GM23248 (cell line): ENCODE measurements at regions of chr4 and their contacts with region 1.

Region 1: DNA sequence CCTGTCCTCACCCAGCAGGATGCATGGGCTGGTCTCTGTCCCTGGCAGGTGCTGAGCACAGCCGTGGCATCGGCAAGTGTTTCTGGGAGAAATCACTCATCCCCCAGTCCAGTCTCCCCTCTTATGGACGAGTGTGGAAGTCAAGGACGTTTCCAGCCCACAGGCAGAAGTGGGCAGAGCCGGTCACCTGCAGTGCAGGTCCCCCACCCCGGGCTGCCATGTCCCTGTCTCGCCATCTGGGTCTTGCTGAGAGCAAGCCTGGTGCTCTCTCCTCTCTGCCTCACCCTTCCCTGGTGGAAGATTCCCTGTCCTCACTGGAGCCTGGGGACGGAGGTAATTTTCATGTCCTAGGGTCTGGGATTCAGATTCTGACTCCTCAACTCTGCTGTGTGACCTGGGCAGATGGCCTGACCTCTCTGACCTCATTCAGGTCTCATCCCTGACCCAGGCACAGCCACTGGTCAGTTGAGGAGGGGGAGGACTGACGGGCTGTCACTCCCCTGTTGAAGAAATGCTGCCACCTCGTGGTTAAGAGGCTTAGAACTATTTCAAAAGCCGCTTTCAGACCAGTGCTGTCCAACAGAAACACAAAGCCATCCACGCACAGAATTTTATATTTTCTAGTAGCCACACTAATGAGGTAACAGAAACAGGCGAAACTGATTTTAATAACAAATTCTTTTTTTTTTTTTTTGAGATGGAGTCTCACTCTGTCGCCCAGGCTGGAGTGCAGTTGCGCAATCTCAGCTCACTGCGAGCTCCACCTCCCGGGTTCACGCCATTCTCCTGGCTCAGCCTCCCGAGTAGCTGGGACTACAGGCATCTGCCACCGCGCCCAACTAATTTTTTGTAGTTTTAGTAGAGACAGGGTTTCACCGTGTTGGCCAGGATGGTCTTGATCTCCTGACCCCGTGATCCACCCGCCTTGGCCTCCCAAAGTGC is 1.8 kb downstream of the CPZ start:
- DNase-seq: peak; percentile 86
- H3K4me3 ChIP-seq: no peak overlapping the region
- H3K27ac ChIP-seq: no peak overlapping the region
- H3K4me1 ChIP-seq: peaks cover 12% of the 10 kb centered on the region
- H3K27me3 ChIP-seq: peaks cover 6% of the 10 kb centered on the region; the same call in 1 of the 2 replicates

Region 2: GRCh38 chr4:8058031-8058479 is 536.3 kb before region 1 on chr4:
- in situ Hi-C with region 1: no loop called
- DNase-seq: no peak
- H3K4me3 ChIP-seq: no peak overlapping the region
- H3K27ac ChIP-seq: no peak overlapping the region
- H3K4me1 ChIP-seq: no peaks in the 10 kb centered on the region
- H3K27me3 ChIP-seq: peaks cover 9% of the 10 kb centered on the region

Region 3: DNA sequence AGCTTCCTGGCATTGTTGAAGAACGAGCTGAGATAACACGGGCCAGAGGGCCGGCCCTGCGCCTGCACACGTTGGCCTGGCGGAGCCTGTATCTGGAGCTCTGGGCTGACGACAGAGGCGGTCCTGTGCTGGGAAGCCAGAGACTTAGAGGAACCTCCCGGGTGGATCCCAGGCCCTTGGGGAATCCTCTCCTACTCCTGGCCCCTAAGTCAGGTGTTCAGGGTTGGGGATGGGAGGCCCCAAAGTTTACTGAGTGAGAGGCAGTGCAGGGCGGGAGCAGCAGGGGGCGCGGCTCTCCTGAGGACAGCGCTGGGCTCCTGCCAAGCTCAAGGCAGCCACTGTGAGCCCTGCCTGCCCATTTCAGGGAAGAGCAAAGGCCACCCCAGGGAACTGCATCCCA is 327.3 kb before region 1 on chr4:
- in situ Hi-C with region 1: no loop called
- DNase-seq: peak; percentile 89
- H3K4me3 ChIP-seq: no peak overlapping the region
- H3K27ac ChIP-seq: no peak overlapping the region
- H3K4me1 ChIP-seq: 0 out of 2 replicates have a peak, but pooled peaks cover 3% of the 10 kb centered on the region
- H3K27me3 ChIP-seq: peaks cover 8% of the 10 kb centered on the region; the same call in 1 of the 2 replicates

Region 4: DNA sequence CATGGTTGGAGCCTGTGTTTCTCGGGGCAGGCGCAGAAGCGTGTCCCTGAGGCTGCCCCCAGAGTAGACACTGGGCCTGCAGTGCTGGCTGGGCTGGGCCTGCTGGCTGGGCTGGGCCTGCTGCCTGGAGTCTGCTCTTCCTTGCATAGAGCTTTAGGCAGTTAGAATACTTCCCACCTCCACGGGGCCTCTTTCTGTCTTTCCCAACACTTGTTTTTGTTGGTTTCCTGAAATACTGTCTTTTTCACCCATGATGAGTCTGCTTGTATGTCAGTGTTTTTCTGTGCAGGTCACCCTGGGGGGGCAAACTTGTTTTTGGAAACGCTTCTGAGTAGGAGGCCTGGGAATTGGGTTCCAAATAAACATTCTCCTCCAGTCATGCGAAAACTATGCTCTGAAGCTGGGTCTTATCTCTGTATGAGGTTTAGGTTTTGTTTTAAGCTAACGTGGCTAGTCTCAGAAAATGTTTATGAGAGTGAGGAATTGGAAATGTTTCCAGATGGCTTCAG is 121.6 kb before region 1 on chr4:
- in situ Hi-C with region 1: loop called (anchors 10 kb)
- DNase-seq: peak; percentile 96
- H3K4me3 ChIP-seq: no peak overlapping the region
- H3K27ac ChIP-seq: peak overlapping the region; percentile 88
- H3K4me1 ChIP-seq: peaks cover 16% of the 10 kb centered on the region
- H3K27me3 ChIP-seq: no peaks in the 10 kb centered on the region